ENCODE measurements at regions of chr10 and their contacts with region 1.

Region 1: GRCh38 chr10:3757638-3758490 is 27.1 kb downstream of the KLF6 start:
- DNase-seq: peak; percentile 56
- H3K4me3 Mint-ChIP-seq: peak overlapping the region; percentile 55
- H3K27ac Mint-ChIP-seq: peak overlapping the region; percentile 97
- H3K4me1 Mint-ChIP-seq: peaks cover 70% of the 10 kb centered on the region
- H3K27me3 Mint-ChIP-seq: no peaks in the 10 kb centered on the region

Region 2: DNA sequence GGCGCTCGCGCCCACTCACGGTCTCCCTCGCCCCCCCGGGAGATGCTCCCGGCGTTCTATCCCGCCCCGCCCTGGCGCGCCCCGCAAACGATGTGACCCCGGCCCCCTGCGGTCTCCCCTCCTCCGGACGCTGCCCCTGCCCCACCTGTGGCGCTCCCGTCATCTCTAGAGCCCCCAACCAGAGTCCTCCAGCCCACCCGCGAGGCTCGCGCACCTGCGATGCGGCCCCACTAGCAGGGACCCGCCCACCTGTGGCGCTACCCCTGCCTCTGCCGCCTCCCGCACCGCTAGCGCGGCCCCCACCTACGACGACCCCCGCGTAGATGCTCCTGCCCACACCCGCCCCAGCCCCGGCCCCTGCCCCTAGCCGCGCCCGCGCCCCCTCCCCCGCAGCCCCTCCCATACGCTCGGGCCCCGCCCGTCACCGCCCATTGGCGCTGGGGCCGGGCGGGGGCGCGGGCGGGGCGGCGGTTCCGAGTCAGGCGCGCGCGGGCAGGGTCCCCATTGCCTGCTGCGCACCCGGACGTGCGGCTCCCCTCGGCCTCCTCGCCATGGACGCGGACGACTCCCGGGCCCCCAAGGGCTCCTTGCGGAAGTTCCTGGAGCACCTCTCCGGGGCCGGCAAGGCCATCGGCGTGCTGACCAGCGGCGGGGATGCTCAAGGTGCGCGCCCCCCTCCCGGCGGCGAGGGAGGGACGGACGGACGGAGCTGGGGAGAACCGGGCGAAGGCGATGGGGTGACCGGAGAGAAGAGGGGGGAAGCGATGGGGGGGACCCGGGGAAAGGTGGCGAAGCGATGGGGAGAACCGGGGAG is 690.6 kb before region 1 on chr10 and contains the start of gene PFKP:
- intact Hi-C with region 1: no loop called
- DNase-seq: peak; percentile 63
- H3K4me3 Mint-ChIP-seq: peak within 1 kb of the TSS; percentile 90
- H3K27ac Mint-ChIP-seq: peak within 1 kb of the TSS; percentile 84
- H3K4me1 Mint-ChIP-seq: peaks cover 26% of the 10 kb centered on the region
- H3K27me3 Mint-ChIP-seq: peaks cover 12% of the 10 kb centered on the region
- total RNA-seq, gene PFKP: 250 and 255 TPM in 2 replicates

Region 3: DNA sequence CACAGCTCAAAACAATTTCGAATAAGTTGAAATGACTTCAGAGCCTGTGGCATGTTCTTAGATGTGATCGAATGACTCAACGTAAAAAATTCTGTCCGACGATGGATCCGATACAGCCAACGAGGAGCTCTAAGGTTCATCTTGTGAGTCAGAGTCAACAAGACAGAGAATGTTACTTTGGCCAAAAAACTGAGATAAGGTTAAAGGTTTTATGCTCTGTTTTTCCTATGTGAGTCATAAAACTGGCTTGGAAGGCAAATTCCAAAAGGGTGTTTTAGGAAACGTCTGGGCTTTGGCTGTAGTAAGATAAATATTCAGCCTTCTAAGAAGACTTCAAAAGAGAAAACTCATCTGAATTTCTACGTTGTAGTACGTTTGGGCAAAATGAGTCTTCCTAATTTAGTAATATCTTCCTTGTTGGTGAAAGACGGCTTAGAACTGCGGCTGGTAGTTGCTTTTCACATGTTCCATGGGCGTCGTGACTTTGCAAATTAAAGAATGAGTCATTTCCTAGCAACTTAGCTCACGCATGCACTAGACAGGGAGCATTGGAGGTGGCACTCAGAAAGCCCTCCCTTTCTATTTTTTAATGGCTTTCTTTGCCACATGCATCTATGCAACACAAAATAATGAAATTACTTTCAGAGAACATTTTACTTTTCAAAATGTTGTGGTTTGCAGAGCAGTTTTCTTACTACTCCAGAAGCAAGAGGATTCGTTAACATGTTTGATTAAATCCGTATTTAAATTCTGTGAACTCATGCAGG is 662.3 kb before region 1 on chr10:
- intact Hi-C with region 1: loop called (anchors 10 kb)
- DNase-seq: peak; percentile 52
- H3K4me3 Mint-ChIP-seq: peak overlapping the region; percentile 31
- H3K27ac Mint-ChIP-seq: peak overlapping the region; percentile 94
- H3K4me1 Mint-ChIP-seq: peaks cover 59% of the 10 kb centered on the region
- H3K27me3 Mint-ChIP-seq: no peaks in the 10 kb centered on the region

Region 4: DNA sequence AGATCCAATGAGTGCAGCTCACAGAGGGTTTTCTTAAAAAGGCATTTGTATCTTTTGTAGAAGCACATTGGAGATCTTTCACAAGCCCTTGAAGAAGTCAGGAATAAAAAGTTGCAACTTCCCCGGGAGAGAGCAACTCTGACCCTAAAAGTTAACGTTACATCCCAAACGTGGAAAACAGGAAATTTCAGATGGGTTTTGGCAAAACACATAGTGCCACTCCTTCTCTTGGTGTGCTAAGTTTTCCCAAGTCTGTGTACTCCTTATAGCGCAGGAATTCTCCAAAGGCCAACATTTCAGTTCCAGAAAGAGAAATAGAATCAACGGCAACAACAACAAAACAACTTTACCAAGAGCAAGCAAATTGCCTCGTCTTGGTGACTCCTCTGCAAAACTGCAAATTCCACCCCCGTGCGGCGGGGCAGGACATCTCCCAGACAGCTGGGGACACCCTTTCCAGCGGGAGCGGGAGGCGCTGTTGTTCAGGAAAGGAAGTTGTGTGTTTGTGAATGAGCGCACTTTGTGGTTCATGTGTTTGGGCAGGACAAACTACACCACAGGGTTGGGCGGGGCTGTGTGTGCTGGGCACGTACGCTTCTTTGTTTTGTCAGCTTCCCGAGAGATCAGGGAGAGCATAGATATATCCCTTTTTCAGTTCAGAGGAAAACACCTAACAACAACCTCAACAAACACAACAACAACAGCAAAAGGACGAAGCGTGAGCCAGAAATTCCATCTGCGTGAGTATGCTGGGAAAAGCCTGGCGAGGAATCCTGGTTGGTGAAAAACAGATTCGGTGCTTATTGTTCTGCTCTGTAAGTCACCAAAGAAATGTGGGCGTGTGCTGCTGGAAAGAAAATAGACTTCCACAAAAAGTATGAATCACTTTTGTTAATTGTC is 290.6 kb before region 1 on chr10:
- intact Hi-C with region 1: loop called (anchors 5 kb)
- DNase-seq: no peak
- H3K4me3 Mint-ChIP-seq: peak overlapping the region; percentile 73
- H3K27ac Mint-ChIP-seq: peak overlapping the region; percentile 92
- H3K4me1 Mint-ChIP-seq: peaks cover 63% of the 10 kb centered on the region
- H3K27me3 Mint-ChIP-seq: no peaks in the 10 kb centered on the region

Region 5: DNA sequence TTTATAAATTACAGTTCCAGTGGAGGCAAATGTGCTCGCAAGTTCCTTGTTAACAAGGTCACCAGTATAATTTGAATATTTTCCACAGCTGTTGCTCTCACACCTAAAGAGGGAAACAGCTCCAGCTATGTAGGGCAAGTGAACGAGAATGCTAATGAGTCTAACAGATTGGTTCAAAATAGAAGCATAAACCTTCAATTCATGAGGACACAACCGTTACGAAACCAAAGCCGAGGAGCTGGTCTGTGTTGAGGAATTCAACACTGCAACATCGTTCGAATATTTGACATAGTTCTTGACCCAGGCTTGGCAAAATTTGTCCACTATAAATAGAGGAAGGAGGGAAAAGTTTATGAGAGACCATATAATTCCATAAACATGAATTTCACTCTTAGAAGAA is 134.1 kb before region 1 on chr10:
- intact Hi-C with region 1: loop called (anchors 1 kb)
- DNase-seq: no peak
- H3K4me3 Mint-ChIP-seq: no peak overlapping the region
- H3K27ac Mint-ChIP-seq: no peak overlapping the region
- H3K4me1 Mint-ChIP-seq: peaks cover 28% of the 10 kb centered on the region
- H3K27me3 Mint-ChIP-seq: peaks cover 17% of the 10 kb centered on the region

Region 6: DNA sequence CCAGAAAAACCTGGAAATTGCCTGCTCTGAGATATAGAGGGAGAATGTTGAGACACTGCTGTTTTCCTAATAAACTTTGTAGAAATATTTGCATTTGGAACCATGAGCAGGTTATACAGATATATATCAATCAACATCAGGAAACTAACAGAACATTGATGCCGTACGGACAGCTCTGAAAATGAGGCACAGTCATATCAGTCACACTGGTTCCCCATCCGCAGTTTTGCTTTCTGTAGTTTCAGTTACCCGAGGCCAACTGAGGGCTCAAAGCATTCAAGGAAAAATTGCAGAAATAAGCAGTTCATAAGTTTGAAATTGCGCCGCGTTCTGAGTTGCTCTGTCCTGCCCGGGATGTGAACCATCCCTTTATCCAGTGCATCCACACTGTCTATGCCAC is 110.8 kb before region 1 on chr10:
- intact Hi-C with region 1: no loop called
- DNase-seq: no peak
- H3K4me3 Mint-ChIP-seq: no peak overlapping the region
- H3K27ac Mint-ChIP-seq: no peak overlapping the region
- H3K4me1 Mint-ChIP-seq: peaks cover 2% of the 10 kb centered on the region
- H3K27me3 Mint-ChIP-seq: peaks cover 41% of the 10 kb centered on the region

Region 7: DNA sequence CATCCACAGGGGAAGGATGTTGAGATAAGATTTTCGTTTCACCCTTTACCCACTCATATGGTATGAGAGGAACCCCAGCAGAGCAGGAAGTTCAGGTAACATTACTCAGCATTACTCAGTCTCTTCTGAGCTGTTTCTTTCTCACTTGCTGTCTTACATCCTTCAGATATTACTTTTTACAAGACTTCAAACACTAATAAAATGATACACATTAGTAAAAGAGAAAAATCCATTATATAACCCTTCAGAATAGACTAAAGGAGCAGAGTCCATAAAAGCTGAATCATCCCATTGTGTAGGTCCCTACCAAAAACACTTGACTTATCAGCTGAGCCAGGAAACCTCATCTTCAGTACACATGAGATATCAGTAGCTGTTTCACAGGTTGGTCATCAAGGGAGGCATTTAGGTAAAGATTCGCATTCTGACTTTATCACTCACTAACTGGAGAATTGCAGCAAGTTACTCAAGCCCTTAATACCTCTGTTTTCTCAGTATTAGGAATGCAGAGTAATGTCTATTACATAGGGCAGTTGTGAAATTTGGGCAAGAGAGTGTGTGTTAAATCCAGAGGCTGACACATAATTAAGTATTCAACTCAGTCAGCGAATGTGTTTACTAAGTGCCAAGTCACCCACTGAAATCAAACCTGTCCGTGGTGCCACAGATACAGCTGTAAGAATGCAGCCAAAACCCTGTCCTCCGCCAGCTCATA is 17.6 kb before region 1 on chr10:
- intact Hi-C with region 1: loop called (anchors 1 kb)
- DNase-seq: no peak
- H3K4me3 Mint-ChIP-seq: no peak overlapping the region
- H3K27ac Mint-ChIP-seq: no peak overlapping the region
- H3K4me1 Mint-ChIP-seq: peaks cover 27% of the 10 kb centered on the region
- H3K27me3 Mint-ChIP-seq: peaks cover 5% of the 10 kb centered on the region

Region 8: DNA sequence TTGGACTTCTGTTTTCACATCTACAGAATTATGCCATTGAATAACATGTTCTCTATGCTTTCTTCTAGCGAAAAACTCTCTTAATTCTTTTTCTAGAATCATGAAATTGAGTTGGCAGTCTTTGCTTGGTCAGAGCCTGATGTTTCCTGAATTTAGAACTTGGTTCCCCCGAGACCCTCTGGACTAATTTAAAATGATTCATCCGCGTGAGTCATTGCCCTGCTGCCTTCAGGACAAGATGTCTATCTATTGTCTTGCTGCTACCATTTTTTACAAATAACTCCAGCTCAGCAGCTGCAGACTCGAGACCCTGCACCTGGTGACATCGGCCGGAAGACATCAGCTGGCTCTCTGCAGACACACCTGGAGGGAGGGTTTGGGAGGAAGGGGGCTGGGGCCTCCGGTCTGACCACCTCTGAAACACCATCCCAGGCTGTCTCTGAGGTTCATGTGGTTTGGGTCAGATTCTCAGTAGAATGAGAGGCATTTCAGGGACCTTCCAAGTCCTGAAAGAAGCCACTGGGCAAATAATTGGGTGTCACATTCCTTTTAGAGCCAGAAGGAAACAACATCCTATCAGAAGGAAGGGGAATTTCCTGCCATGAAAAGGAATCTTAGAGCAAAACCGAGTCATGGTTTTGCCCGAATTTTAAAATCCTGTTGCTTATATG is 48.1 kb after region 1 on chr10:
- intact Hi-C with region 1: loop called (anchors 1 kb)
- DNase-seq: peak; percentile 42
- H3K4me3 Mint-ChIP-seq: peak overlapping the region; percentile 3
- H3K27ac Mint-ChIP-seq: peak overlapping the region; percentile 98
- H3K4me1 Mint-ChIP-seq: peaks cover 70% of the 10 kb centered on the region
- H3K27me3 Mint-ChIP-seq: no peaks in the 10 kb centered on the region

Region 9: DNA sequence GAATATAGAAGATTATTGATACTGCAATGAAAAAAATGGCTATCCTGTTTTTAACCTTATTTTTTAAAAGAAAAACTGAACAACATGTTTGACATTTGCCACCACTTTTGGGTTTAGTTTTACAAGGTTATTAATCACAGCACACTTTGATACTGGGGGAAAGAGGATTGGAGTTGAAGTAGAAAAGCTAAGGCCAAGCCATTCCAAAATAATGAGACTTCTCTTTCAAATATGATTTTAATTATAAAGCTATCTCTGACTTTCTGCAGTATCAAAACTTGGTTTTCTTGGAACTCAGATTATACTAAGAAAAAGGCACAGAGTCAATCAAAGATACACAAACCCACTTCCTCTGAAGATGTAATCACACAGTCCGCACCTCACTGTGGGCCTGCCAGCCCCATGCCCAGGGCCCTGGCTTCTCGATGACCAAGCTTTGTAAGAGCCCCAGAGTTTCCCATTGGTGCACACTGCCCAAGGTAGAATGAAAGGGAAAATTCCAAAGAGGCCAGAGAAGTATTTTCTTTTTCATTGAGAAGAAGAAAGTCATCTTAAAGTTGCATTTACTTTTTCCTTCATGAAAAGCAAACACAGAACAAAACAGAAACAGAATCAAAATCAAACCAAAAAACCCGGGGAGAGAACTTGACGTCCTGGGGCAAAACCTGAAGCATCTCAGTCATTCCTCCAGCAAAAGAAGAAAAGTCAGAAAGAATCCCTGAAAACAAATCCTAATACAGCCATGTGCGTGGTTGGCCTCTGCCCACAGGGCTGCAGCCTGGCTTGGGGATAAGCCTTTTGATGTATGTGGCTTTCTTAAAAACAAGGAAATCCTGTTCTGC is 214.8 kb after region 1 on chr10:
- intact Hi-C with region 1: loop called (anchors 5 kb)
- DNase-seq: no peak
- H3K4me3 Mint-ChIP-seq: peak overlapping the region; percentile 68
- H3K27ac Mint-ChIP-seq: peak overlapping the region; percentile 95
- H3K4me1 Mint-ChIP-seq: peaks cover 42% of the 10 kb centered on the region
- H3K27me3 Mint-ChIP-seq: no peaks in the 10 kb centered on the region

Region 10: GRCh38 chr10:3995302-3996210 is 237.7 kb after region 1 on chr10:
- intact Hi-C with region 1: no loop called
- DNase-seq: no peak
- H3K4me3 Mint-ChIP-seq: no peak overlapping the region
- H3K27ac Mint-ChIP-seq: no peak overlapping the region
- H3K4me1 Mint-ChIP-seq: peaks cover 10% of the 10 kb centered on the region
- H3K27me3 Mint-ChIP-seq: no peaks in the 10 kb centered on the region